ENCODE measurements at regions of chr12 and their contacts with region 1.

Region 1: GRCh38 chr12:13100882-13101769 is 2.3 kb downstream of the GSG1 start:
- DNase-seq: peak; percentile 73 to 91
- H3K4me3 ChIP-seq: peak overlapping the region; percentile 55
- H3K4me1 ChIP-seq: peaks cover 24% of the 10 kb centered on the region
- H3K27me3 ChIP-seq: no peaks in the 10 kb centered on the region

Region 2: DNA sequence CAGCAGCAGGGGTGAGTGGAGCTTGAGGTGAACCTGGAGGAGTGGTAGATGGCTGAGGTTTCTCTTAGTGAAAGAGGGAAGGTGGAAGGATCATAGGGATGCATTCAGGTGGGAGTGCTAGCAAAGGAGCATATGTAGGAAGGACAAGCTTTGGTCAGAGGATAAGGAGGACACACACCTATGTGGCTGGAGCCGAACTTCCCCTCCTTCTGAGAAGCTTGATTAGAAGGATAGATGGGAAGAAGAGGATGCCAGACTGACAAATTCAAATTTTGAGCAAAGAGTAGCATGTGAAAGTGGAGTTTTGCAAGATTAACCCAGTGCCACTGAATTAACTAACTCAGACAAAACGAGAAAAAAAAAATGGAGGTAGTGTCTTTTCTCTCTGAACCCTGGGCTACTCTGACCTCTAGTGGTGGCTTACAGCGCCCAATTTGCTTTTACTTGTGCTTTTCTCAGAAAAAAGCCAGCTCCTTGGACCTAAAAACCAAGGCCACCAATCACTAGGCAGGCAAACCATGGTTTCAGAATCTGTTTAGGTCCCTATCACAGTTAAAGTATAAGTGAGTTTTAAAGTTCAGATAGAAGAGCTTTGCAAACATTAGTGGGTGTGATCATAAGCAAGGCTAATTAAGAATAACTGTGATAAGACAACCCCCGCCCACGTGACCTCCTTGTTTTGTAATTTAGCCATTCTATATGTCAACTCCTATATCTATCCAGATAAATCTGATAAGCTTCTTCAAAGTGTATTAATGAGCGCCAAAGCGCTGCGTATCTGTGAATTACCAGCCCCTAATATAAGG is 110.9 kb after region 1 on chr12:
- in situ Hi-C with region 1: loop called (anchors 5 kb)
- DNase-seq: peak; percentile 75 to 82
- H3K4me3 ChIP-seq: no peak overlapping the region
- H3K4me1 ChIP-seq: peaks cover 23% of the 10 kb centered on the region
- H3K27me3 ChIP-seq: no peaks in the 10 kb centered on the region

Region 3: GRCh38 chr12:13337791-13338190 is 236.7 kb after region 1 on chr12:
- in situ Hi-C with region 1: no loop called
- DNase-seq: no peak
- H3K4me3 ChIP-seq: no peak overlapping the region
- H3K4me1 ChIP-seq: no peaks in the 10 kb centered on the region
- H3K27me3 ChIP-seq: peaks cover 3% of the 10 kb centered on the region; the same call in 1 of the 2 replicates